Tibial artery (tissue), 4 donors: ENCODE measurements at regions of chr16 and their contacts with region 1.

Region 1: DNA sequence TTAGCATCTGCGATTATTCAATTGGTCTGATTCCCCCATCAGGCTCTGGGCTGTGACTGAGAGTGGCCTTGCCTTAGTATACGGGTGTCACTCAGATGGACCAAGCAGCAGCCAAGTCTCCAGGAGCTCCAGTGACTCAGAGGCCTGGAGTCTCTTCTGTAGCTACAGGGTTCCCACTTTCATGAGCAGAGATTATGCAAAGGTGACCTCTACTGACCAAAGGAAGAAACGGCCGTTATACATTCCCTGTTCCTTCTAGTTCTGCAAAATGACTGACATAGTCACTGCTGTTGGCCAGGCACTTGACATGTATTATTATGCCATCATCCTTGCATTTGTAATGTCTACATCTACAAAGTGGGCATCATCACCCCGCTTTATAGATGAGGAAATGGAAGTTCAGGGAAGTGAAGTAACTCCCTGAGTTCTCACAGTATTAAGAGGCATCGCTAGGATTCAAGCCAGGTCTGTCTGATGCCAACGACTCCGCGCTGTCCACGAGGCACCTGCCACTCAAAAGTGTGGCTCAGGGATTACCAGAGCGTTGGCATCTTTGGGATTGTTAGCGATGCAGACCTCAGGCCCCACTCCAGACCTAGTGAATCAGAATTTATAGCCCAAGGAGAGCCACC is 23.3 kb downstream of the SLC38A7 start:
- DNase-seq: peak in 1 of 2 donors; percentile 45
- H3K4me3 ChIP-seq: no peak overlapping the region
- H3K27ac ChIP-seq: no peak overlapping the region
- H3K4me1 ChIP-seq: no peaks in the 10 kb centered on the region
- H3K27me3 ChIP-seq: no peaks in the 10 kb centered on the region
- CTCF ChIP-seq: peak; percentile 46

Region 2: GRCh38 chr16:57938936-57939871 is 722.1 kb before region 1 on chr16:
- intact Hi-C with region 1: no loop called
- DNase-seq: peak; percentile 47 to 79
- H3K4me3 ChIP-seq: no peak overlapping the region
- H3K27ac ChIP-seq: no peak overlapping the region
- H3K4me1 ChIP-seq: peaks cover 0 to 13% (median 0%) of the 10 kb centered on the region in 4 donors
- H3K27me3 ChIP-seq: peaks cover 0 to 41% of the 10 kb centered on the region in 2 donors
- CTCF ChIP-seq: no peak

Region 3: GRCh38 chr16:58511933-58512815 is 149.1 kb before region 1 on chr16:
- intact Hi-C with region 1: loop called (anchors 5 kb)
- DNase-seq: peak; percentile 74 to 81
- H3K4me3 ChIP-seq: no peak overlapping the region
- H3K27ac ChIP-seq: no peak overlapping the region
- H3K4me1 ChIP-seq: peaks cover 0 to 19% (median 13%) of the 10 kb centered on the region in 4 donors
- H3K27me3 ChIP-seq: peaks cover 0 to 13% of the 10 kb centered on the region in 2 donors
- CTCF ChIP-seq: peak; percentile 62 to 64